Adrenal gland (tissue), 19 donors: ENCODE measurements at regions of chr3 and their contacts with region 1.

Region 1: DNA sequence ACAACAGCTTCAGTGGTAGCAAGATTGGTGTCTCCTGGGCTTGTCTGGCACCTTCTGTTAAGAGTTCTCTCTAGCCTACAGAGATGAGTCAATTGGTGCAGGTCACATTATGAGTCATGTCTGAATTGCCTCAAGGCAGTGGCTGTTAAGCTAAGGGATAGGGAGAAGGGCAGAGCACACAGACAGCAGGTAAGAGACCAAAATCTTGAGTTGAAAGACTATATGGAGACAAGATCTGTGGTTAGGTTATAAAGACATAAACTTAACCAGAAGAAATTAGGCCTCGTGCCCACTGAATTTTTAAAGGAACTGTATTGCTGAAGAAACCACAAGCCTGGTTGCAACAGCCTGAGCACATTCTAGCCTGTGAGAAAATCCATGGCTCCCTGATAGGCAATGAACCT is 19.2 kb upstream of the KPNA1 start:
- DNase-seq: peak; percentile 39 to 70 (median 50)
- H3K4me3 ChIP-seq: no peak overlapping the region
- H3K27ac ChIP-seq: peak overlapping the region in 1 of 5 donors; percentile 64
- H3K4me1 ChIP-seq: peaks cover 0 to 3% of the 10 kb centered on the region in 2 donors
- H3K27me3 ChIP-seq: no peaks in the 10 kb centered on the region
- CTCF ChIP-seq: no peak
- POLR2A ChIP-seq: no peak

Region 2: DNA sequence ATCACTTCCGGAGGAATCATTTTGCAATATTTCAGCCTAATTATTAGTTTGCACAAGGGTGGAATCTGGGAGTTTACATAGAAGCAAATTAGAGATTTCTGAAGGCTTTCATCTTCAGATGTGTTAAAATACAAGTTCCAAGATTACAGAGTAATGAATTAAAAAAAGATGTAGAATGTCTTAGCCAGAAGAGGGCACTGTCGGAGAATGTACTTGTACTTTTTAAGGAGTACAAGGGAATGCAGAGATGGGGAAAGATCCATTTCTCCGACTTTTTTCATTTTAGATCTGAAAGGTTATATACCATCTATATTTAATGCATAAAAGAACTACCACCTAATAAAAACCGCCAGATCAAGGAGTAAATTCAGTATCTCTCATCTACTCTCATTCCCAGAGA is 74.9 kb before region 1 on chr3:
- intact Hi-C with region 1: loop called in 1 of 2 experiments (anchors 10 kb)
- DNase-seq: peak in 2 of 7 donors; percentile 29 to 39
- H3K4me3 ChIP-seq: no peak overlapping the region
- H3K27ac ChIP-seq: no peak overlapping the region
- H3K4me1 ChIP-seq: peaks cover 0 to under 1% of the 10 kb centered on the region in 2 donors
- H3K27me3 ChIP-seq: no peaks in the 10 kb centered on the region
- CTCF ChIP-seq: peak; percentile 41 to 55 (median 52)
- POLR2A ChIP-seq: no peak

Region 3: DNA sequence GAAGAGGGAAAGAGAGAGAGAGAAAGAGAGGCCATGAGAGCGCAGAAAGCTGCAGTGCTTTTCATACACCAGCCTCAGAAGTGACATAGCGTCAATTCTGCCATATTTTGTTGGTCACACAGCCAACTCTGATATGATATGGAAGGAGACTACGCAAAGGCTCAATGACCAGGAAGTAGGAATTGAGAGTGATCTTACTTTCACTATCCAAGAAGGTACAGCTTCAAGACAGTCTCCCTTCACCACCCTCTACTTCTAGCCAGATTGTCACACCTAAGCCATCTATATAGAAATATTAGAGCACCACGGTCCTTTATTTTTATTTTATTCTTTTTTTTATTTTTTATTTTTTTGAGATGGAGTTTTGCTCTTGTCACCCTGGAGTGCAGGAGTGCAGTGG is 64.6 kb after region 1 on chr3:
- intact Hi-C with region 1: no loop called
- DNase-seq: no peak
- H3K4me3 ChIP-seq: no peak overlapping the region
- H3K27ac ChIP-seq: no peak overlapping the region
- H3K4me1 ChIP-seq: no peaks in the 10 kb centered on the region
- H3K27me3 ChIP-seq: no peaks in the 10 kb centered on the region
- CTCF ChIP-seq: no peak
- POLR2A ChIP-seq: no peak